Panc1 (cell line): ENCODE measurements at regions of chr1 and their contacts with region 1.

Region 1: GRCh38 chr1:32316903-32317277 is 19.1 kb downstream of the MARCKSL1 start:
- DNase-seq: no peak
- ATAC-seq: no peak
- H3K4me3 ChIP-seq: no peak overlapping the region
- H3K27ac ChIP-seq: no peak overlapping the region
- H3K4me1 ChIP-seq: peaks cover 4% of the 10 kb centered on the region; the same call in 1 of the 2 replicates
- H3K27me3 ChIP-seq: no peaks in the 10 kb centered on the region
- CTCF ChIP-seq: no peak

Region 2: DNA sequence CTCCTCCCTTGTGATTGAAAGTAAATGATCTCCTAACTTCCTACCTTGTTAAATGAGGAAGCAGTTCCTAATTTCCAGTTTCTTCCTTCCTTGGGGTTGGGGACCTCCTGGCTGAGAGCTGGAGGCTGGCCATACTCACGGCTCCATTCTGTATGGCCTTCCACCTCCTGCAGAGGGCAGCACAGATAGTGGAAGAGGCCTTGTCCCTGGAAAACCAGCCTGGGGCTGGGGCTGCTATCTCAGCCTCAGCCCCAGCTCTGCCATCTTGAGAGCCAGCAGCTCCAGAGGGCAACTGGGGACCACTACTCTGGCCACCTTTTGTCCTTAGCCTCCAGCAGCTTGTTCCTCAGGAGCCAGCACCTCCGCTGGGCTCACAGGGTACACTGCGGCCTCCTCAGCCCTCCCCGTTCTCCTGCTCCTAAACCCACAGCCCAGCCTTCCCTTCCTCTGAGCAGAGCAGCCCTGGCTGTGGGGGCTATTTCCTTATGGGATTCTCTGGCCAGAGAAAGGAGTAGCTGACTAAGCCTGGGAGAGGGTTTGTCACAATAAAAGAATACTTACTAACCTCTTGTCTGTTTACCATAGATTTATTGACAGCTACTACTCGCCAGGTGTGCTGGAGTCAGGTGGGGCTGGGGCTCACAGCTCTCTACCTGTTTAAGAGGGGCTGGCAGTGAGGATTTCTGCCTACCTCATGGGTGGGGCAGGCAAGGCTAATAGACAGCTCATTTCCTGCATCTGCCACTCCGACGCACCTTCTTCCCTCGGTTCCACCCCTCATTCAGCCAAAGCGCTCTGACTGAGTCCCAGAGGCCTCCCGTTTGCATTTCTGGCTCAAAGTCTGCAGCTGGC is 101.0 kb before region 1 on chr1:
- CTCF ChIA-PET with region 1: interaction called, 10 read pairs
- POLR2A ChIA-PET with region 1: no interaction called
- in situ Hi-C with region 1: no loop called
- intact Hi-C with region 1: loop called (anchors 1 kb)
- DNase-seq: no peak
- ATAC-seq: peak; percentile 95
- H3K4me3 ChIP-seq: no peak overlapping the region
- H3K27ac ChIP-seq: no peak overlapping the region
- H3K4me1 ChIP-seq: peaks cover 5% of the 10 kb centered on the region
- H3K27me3 ChIP-seq: no peaks in the 10 kb centered on the region
- CTCF ChIP-seq: peak; percentile 92

Region 3: GRCh38 chr1:32221980-32222755 is 94.7 kb before region 1 on chr1 and contains the starts of genes EIF3I and TMEM234:
- CTCF ChIA-PET with region 1: interaction called, 5 read pairs
- POLR2A ChIA-PET with region 1: no interaction called
- in situ Hi-C with region 1: no loop called
- intact Hi-C with region 1: loop called (anchors 1 kb)
- DNase-seq: no peak
- ATAC-seq: peak; percentile 99
- H3K4me3 ChIP-seq: peak within 1 kb of the TSS; percentile 95 to 99
- H3K27ac ChIP-seq: peak within 1 kb of the TSS; percentile 98
- H3K4me1 ChIP-seq: peaks cover 19% of the 10 kb centered on the region
- H3K27me3 ChIP-seq: no peaks in the 10 kb centered on the region
- CTCF ChIP-seq: no peak
- total RNA-seq, gene EIF3I: 294 TPM
- total RNA-seq, gene TMEM234: 23.3 TPM

Region 4: DNA sequence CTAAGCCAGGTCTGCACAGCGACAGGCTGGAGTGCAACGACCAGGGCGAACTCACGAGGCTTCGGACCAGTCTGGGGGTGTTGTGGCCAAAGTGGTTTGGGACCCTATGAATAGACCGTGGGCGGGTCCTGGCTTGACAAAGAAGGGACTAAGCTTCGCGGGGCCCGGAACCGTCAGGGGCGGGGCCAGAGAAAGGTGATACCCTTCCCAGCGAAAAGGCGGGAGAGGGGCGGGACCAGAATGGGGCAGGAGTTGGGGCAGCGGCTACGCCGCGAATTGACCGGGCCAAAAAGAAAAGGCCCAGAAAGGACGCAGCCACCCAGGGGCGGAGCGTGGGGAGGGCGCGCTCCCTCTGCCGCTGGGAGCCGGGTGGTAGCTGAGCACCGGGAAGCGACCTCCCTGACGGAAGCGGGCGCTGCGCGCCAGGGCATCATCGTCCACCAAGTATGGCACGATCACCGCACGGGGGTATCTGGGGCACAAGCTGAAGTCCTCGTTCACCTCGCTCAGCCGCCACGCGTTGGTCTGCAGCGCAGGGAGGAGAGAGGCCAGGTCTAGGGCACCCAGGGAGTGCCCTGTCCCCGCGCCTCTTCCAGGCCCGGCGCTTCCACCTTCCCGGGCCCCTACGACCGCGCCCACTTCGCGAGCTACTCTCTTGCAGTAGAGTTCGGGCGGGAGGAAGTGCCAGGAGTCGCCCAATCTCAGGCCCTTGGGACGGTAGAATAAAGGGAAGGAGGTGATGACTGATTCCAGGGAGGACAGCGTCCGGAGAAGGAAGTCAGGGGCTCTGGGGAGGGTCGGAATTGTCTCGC is 76.5 kb before region 1 on chr1:
- CTCF ChIA-PET with region 1: interaction called, 11 read pairs
- POLR2A ChIA-PET with region 1: interaction called, 6 read pairs
- in situ Hi-C with region 1: no loop called
- intact Hi-C with region 1: no loop called
- DNase-seq: no peak
- ATAC-seq: peak; percentile 76
- H3K4me3 ChIP-seq: peak overlapping the region; percentile 60 to 90
- H3K27ac ChIP-seq: peak overlapping the region; percentile 82
- H3K4me1 ChIP-seq: peaks cover 12% of the 10 kb centered on the region
- H3K27me3 ChIP-seq: no peaks in the 10 kb centered on the region
- CTCF ChIP-seq: peak; percentile 72